Sigmoid colon (tissue), 7 donors: ENCODE measurements at regions of chr11 and their contacts with region 1.

Region 1: GRCh38 chr11:14454861-14455632 is 44.6 kb downstream of the COPB1 start:
- DNase-seq: no peak
- H3K4me3 ChIP-seq: no peak overlapping the region
- H3K27ac ChIP-seq: peak overlapping the region in 1 of 4 donors; percentile 5
- H3K4me1 ChIP-seq: peaks cover 0 to 4% (median 0%) of the 10 kb centered on the region in 4 donors
- H3K27me3 ChIP-seq: no peaks in the 10 kb centered on the region
- CTCF ChIP-seq: peak in 3 of 4 experiments; percentile 36 to 59 (median 40)
- EP300 ChIP-seq: no peak
- POLR2A ChIP-seq: no peak

Region 2: GRCh38 chr11:14300661-14301304 is 154.3 kb before region 1 on chr11:
- intact Hi-C with region 1: loop called (anchors 2 kb)
- DNase-seq: peak; percentile 72
- H3K4me3 ChIP-seq: no peak overlapping the region
- H3K27ac ChIP-seq: no peak overlapping the region
- H3K4me1 ChIP-seq: peaks cover 0 to 29% (median 15%) of the 10 kb centered on the region in 4 donors
- H3K27me3 ChIP-seq: no peaks in the 10 kb centered on the region
- CTCF ChIP-seq: peak; percentile 48 to 74 (median 72)
- EP300 ChIP-seq: no peak
- POLR2A ChIP-seq: no peak

Region 3: DNA sequence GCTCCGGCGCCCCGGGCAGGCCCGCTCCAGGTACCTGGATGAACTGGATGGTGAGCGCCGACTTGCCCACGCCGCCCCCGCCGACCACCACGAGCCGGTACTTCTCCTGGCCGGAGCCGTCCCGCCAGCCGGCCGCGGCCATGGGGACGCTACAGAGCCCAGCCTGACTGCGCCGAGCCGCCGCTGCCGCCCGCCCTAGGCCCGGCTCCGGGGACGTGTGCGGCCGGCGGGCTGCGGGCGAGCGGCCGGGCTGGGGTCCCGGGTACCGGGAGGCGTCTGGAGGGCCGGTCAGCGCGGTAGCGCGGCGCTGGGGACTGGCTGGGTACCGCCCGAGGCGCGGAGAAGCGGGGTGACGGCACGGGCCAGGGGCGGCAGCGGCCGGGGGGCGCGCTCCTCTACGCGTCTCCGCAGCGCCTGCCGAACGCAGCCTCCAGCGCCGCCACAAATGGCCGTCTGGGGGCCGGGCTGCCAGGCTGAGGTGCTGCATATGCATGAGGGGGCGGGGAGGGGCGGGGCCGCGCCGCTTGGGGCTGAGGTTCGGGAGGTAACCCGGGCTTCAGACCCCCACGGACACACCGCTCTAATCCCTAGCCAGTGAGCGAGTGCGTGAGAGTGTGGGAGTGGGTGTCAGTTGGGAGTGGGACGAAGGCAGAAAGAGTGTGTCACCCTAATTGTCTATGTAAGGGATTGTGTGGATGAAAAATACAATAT is 96.2 kb before region 1 on chr11 and contains the start of gene RRAS2:
- intact Hi-C with region 1: loop called (anchors 5 kb)
- DNase-seq: peak; percentile 86
- H3K4me3 ChIP-seq: peak within 1 kb of the TSS; percentile 80 to 93 (median 88)
- H3K27ac ChIP-seq: peak within 1 kb of the TSS; percentile 78 to 92 (median 87)
- H3K4me1 ChIP-seq: peaks cover 0 to 23% (median 15%) of the 10 kb centered on the region in 4 donors
- H3K27me3 ChIP-seq: no peaks in the 10 kb centered on the region
- CTCF ChIP-seq: no peak
- EP300 ChIP-seq: no peak
- POLR2A ChIP-seq: peak; percentile 33 to 39
- total RNA-seq, gene RRAS2: 31.1 to 48.5 (median 40.4) TPM

Region 4: DNA sequence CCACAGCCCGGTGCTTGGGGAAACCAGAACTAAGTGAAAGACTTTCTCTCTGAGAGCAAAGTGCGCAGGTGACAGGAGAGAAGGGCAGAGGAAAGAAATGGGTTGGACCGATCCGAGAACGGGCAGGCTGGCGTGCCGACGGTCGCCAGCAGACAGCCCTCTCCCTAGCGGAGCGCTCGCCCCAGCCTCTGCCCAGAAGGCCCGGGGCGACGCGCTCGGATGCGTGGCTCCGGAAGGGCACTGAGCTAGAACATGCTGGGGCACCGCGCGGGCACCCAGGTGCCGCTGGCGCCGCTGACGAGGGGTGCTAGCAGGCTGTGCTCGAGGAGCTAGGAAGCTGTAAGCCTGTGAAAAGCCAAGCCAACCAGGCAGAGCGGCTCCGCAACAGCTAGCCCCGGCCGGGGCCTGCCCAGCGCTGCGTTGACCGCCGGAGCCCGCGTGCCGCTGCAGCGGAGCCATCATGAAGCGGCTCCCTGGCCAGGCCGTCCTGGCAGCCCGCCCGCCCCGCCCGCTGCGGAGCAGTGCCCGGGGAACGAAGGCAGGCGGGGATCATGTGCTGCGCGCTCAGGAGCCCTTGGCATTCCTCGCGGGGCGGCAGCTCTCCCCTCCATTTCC is 74.0 kb before region 1 on chr11:
- intact Hi-C with region 1: loop called (anchors 10 kb)
- DNase-seq: peak; percentile 87
- H3K4me3 ChIP-seq: peak overlapping the region; percentile 22 to 57 (median 52)
- H3K27ac ChIP-seq: peak overlapping the region; percentile 71 to 79 (median 73)
- H3K4me1 ChIP-seq: peaks cover 0 to 24% (median 7%) of the 10 kb centered on the region in 4 donors
- H3K27me3 ChIP-seq: no peaks in the 10 kb centered on the region
- CTCF ChIP-seq: no peak
- EP300 ChIP-seq: no peak
- POLR2A ChIP-seq: no peak

Region 5: DNA sequence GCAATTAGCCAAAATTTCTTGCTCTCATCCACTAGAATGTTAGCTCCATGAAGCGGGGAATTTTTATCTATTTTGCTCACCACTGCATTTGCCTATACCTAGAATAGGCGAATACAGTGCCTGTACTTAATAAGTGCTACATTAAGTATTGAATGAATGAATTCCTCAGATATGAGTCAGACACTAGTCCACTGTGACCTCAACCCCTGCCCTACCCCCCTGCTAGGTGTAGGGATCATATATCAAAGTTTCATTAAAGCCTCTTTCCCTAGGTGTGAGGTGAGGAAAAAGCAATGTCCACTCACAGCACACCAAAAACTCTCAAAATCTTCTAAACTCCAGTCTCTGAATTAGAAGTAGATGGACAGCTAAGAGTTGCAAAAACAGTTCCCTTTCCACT is 74.9 kb after region 1 on chr11:
- intact Hi-C with region 1: no loop called
- DNase-seq: no peak
- H3K4me3 ChIP-seq: no peak overlapping the region
- H3K27ac ChIP-seq: no peak overlapping the region
- H3K4me1 ChIP-seq: no peaks in the 10 kb centered on the region
- H3K27me3 ChIP-seq: no peaks in the 10 kb centered on the region
- CTCF ChIP-seq: no peak
- EP300 ChIP-seq: no peak
- POLR2A ChIP-seq: no peak